ENCODE measurements at regions of chr22 and their contacts with region 1.

Region 1: GRCh38 chr22:27507111-27507611 is 294.4 kb downstream of the MN1 start:
- DNase-seq: no peak
- ATAC-seq: no peak

Region 2: GRCh38 chr22:27531782-27532530 is 24.8 kb after region 1 on chr22:
- intact Hi-C with region 1: no loop called
- DNase-seq: no peak
- ATAC-seq: no peak

Region 3: GRCh38 chr22:27546157-27546935 is 39.2 kb after region 1 on chr22:
- intact Hi-C with region 1: loop called (anchors 1 kb)
- DNase-seq: no peak
- ATAC-seq: no peak

Measured in sciatic nerve (tissue), 2 donors.